ENCODE measurements at regions of chr11 and their contacts with region 1.

Region 1: DNA sequence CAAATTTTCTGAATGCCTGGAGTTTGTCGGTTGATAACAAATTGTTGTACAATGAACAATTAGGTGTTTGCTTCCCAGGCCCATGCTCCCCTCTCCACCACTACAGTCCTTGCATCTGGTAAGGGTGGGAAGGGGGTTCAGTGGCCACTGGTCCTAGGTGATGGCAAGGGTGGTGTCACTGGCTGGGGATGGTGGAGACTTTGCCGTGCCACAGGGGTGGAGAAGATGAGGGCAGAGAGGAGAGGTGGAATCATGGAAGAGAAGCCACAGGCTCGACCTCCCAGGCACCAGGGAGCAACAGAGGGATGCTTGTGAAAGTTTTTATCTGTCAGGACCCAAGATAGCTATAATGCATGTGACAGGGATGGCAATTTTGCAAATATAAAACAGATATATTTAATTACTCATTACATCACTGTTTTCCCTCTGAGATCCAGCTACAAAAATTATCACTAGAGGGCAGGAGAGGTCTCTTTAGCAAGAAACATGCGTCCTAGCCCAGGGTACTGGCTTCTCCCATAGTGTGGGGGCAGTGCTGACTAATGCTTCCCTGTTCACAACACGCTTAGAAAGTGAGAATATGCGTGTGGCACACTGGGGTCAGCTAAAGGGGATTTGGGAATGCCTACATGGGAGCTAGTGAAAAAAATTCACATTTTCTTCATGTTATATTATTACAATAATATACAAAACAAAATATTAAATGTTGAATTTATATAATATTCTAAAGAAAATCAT is 49.0 kb upstream of the AMPD3 start:
- DNase-seq: peak in 1 of 2 experiments; percentile 31
- H3K4me3 ChIP-seq: no peak overlapping the region
- H3K27ac ChIP-seq: 0 out of 2 replicates have a peak overlapping the region, but pooled peaks have one; percentile 27
- H3K4me1 ChIP-seq: no peaks in the 10 kb centered on the region
- H3K27me3 ChIP-seq: no peaks in the 10 kb centered on the region; a peak in 1 of 7 replicates
- CTCF ChIP-seq: peak; percentile 30 to 90 (median 74)
- EP300 ChIP-seq: no peak
- POLR2A ChIP-seq: no peak
- RAD21 ChIP-seq: peak; percentile 89 to 93

Region 2: DNA sequence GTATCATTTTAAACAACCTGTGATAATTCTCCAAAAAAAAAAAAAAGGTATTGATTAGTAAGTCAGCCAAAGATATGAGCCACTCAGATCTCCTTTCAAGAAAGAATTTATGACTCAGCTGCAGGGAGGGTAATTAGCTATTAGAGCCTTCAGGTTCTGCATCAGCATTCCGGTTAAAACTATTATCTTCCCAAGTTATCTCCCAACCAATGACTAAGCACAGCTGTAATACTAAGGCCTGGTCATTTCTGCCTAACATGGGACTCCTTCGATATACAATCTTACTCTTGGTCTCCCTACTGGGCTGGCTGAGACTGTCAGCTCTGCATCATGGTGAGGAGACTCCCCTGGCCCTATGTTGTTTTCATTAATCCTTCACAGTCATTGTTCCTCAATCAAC is 172.4 kb before region 1 on chr11:
- CTCF ChIA-PET with region 1: no interaction called
- POLR2A ChIA-PET with region 1: no interaction called
- DNase-seq: no peak
- H3K4me3 ChIP-seq: no peak overlapping the region
- H3K27ac ChIP-seq: no peak overlapping the region
- H3K4me1 ChIP-seq: no peaks in the 10 kb centered on the region
- H3K27me3 ChIP-seq: no peaks in the 10 kb centered on the region
- CTCF ChIP-seq: no peak
- EP300 ChIP-seq: no peak
- POLR2A ChIP-seq: no peak
- RAD21 ChIP-seq: no peak

Region 3: GRCh38 chr11:10317776-10318526 is 88.1 kb before region 1 on chr11:
- CTCF ChIA-PET with region 1: no interaction called
- POLR2A ChIA-PET with region 1: no interaction called
- DNase-seq: no peak
- H3K4me3 ChIP-seq: no peak overlapping the region
- H3K27ac ChIP-seq: no peak overlapping the region
- H3K4me1 ChIP-seq: peaks cover 2 to 15% (median 8%) of the 10 kb centered on the region in 4 experiments
- H3K27me3 ChIP-seq: no peaks in the 10 kb centered on the region
- CTCF ChIP-seq: no peak
- EP300 ChIP-seq: no peak
- POLR2A ChIP-seq: no peak
- RAD21 ChIP-seq: no peak

Region 4: GRCh38 chr11:10387206-10388083 is 18.6 kb before region 1 on chr11:
- CTCF ChIA-PET with region 1: interaction called, 15 read pairs
- POLR2A ChIA-PET with region 1: no interaction called
- DNase-seq: peak in 1 of 2 experiments; percentile 34
- H3K4me3 ChIP-seq: no peak overlapping the region
- H3K27ac ChIP-seq: no peak overlapping the region
- H3K4me1 ChIP-seq: peaks cover 0 to 4% (median 0%) of the 10 kb centered on the region in 4 experiments; a peak in 2 of 7 replicates
- H3K27me3 ChIP-seq: no peaks in the 10 kb centered on the region
- CTCF ChIP-seq: no peak
- EP300 ChIP-seq: no peak
- POLR2A ChIP-seq: no peak
- RAD21 ChIP-seq: no peak

Region 5: DNA sequence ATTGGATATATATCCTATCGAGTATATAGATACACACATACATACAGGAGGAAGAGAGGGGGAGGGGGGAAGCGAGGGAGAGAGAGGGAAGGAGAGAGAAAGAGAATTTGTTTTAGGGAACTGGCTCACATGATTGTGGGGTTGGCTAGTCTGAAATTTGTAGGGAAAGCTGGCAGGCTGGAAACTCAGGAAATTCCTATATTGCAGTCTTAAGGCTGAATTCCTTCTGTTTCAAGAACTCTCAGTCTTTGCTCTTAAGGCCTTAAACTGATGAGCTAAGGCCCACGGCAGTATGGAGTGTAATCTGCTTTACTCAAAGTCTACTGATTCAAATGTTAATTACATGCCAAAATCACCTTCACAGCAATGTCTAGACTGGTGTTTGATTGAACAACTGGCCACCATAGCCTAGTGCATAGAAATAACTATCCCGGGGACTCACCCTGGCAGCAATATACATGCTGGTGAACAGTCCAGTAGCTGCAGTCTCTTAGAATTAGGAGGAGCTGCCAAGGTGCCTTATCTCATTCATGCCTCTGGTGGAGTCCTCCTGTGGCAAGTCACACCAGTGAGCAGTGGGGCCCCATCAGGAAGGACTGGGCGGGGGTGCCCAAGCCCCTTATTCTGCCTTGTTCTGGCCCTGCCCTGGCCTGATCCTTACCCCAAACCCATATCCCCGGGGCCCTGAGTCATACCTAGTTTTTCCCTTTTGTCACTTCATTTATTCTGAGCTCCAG is 10.7 kb before region 1 on chr11:
- CTCF ChIA-PET with region 1: interaction called, 16 read pairs
- POLR2A ChIA-PET with region 1: no interaction called
- DNase-seq: peak in 1 of 2 experiments; percentile 30
- H3K4me3 ChIP-seq: no peak overlapping the region
- H3K27ac ChIP-seq: no peak overlapping the region
- H3K4me1 ChIP-seq: 0 out of 7 replicates have a peak, but pooled peaks cover 0 to 2% (median 0%) of the 10 kb centered on the region in 4 experiments
- H3K27me3 ChIP-seq: no peaks in the 10 kb centered on the region
- CTCF ChIP-seq: no peak
- EP300 ChIP-seq: no peak
- POLR2A ChIP-seq: no peak
- RAD21 ChIP-seq: no peak

Region 6: DNA sequence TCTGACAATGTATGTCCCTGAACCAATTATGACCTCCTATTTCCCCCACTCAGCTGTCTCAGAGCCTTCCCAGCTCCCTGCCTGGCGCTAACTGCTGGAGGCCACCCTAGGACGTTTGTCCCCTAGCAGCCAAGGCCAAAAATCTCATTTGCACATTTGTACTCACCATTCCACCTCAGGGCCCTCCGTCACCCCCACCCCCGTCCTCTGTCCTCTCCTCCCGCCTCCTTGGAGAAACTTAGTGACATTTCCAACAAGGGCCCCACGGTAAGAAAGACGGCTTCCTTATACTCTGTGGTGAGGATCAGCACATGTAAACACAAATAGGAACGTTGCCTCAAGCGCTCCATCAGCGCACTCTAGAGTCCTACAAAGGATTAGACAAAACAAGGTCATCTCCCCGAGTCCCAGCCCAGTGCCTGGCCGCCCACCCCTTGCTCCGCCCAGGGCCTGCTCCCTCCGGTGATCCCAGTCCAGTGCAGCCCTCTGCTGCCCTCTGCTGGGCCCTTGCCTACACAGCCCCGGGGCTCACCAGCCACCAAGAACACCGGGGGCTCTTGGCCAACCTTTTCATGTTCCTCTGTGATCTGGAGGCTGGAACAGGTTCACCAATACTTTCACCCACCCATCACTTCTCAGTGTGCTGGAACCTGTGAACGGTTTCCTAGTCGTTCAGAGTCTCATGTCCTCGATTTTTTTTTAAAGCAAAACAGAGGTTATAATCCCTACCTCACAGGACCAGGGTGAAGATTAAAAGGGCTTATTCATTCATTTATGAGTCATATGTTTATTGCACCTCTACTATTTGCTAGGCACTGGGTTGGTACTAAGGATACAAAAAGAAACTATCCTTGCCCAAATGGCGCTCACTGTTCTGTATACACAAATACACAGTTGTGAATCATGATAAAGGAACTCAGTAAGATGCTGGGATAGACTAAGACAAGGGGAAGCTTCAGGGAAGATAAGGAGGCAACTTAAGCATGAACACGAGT is 329.8 kb after region 1 on chr11:
- CTCF ChIA-PET with region 1: interaction called, 10 read pairs
- POLR2A ChIA-PET with region 1: no interaction called
- DNase-seq: peak; percentile 90 to 98
- H3K4me3 ChIP-seq: peak overlapping the region in 1 of 4 experiments; percentile 47; a peak in 4 of 8 replicates
- H3K27ac ChIP-seq: no peak overlapping the region
- H3K4me1 ChIP-seq: peaks cover 0 to 4% (median 3%) of the 10 kb centered on the region in 4 experiments; a peak in 4 of 7 replicates
- H3K27me3 ChIP-seq: no peaks in the 10 kb centered on the region; a peak in 1 of 7 replicates
- CTCF ChIP-seq: peak; percentile 85 to 95 (median 93)
- EP300 ChIP-seq: no peak; a peak in 1 of 3 replicates
- POLR2A ChIP-seq: 0 out of 3 replicates have a peak, but pooled peaks of 1 of the 2 experiments have one; percentile 23
- RAD21 ChIP-seq: peak; percentile 99